Posterior vena cava (tissue), 2 donors: ENCODE measurements at regions of chr11 and their contacts with region 1.

Region 1: GRCh38 chr11:35780951-35781860 is 118.6 kb downstream of the TRIM44 start:
- DNase-seq: no peak

Region 2: DNA sequence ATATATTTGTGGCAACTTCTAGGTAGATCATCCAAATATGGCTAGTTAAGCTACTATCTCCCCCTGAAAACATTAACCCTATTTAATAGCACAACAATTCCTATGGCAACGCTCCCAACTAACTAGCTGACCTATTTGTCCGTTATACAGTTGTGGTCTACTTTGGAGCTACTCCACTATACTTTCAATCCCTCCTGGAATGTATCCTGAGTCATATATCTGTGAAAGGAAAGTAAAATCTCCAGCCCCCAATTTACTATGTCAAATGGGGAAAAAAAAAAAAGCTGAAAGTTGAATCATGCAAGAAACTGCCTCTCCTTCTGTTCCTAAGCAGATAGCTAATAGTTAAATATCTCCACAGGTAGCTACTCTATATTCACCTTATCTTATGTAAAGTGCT is 513.7 kb before region 1 on chr11:
- intact Hi-C with region 1: no loop called
- DNase-seq: no peak

Region 3: DNA sequence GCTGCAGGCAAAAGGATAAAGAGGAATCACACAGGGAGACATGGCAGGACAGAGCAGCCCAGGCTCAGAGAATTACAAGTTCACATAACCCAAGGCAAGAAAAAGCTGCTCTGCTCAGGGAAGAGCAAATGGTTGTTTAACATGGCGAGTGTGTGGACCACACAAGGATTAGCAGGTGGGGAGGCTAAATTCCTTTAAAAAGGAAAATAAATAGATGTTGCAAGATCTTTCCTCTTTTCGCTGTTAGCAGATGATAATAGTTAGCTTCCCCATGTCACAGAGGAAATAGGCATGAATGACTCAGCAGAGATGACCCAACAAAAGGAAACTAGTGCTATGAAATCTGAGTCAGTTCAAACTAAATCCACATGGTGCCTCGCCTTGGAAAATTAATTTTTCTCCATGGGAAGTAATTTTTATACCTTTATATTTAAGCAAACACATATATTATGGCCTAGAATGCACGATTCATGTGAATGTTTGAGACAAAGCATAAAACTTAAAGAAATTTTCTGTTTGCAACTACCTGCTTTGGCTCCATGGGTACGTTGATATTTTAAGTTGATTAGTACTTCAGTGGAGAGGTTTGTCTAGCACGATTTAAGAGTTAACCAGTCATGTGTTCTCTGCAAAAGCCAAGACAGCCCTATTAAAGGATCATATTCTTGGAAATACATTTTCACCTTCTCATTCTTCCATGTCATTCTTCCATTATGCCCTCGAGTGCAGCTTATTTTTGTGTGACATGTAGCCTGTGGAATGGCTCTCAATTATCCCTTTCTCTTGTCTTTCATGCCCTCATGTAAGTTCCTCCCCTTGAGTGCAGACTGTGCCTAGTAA is 201.4 kb before region 1 on chr11:
- intact Hi-C with region 1: no loop called
- DNase-seq: no peak

Region 4: GRCh38 chr11:35746356-35747153 is 34.7 kb before region 1 on chr11:
- intact Hi-C with region 1: no loop called
- DNase-seq: no peak

Region 5: DNA sequence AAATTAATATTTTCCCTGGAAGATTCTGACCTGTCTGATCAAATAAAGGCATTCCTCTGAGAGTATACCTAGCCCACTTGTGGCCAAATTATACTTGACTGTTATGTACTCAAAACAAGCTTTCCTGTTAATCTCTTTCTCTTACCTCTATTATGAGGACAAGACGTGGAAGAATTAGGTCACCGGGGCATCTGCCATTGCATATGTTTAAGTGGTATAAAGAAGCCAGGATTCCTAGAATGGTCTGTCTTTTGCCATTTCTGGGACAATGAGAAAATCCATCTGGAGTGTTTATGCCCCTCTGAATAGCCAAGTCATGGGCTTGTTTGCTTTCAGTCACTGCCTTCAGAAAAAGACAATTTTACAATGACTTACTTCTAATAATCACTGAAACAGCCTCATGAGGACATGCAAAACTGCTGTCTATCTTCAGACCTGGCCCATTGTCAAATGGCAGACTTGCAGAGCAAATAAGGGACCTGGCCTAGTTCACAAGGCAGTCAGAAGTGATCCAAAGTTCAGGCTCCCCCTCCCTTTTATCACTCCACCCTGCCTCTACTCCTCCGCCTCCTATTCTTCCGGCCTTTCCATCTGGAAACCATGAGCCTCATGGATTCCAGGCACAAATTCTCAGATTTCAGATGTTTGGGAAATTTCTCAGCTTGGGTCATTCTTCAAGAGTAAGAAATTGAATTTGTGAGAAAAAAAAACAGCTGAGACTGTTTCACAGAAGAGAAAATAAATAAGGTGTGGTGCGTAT is 34.5 kb after region 1 on chr11:
- intact Hi-C with region 1: no loop called
- DNase-seq: no peak

Region 6: DNA sequence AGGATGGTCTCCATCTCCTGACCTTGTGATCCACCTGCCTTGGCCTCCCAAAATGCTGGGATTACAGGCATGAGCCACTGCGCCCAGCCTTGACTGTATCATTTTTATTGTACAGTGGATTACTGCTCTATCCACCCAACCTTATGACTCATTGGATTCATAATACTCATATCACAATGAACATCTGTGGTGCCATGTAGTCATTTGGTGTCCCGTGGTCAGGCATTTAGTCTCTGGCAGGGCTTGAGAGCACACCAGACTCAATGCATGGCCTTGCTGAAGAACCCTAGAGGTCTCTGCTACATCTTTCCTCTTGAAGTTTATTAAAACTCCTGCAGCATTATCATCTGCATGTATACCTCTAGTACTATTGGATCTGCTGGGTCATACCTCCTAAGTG is 64.7 kb after region 1 on chr11:
- intact Hi-C with region 1: loop called in 1 of 2 experiments (anchors 5 kb)
- DNase-seq: no peak